GM12878 (cell line): ENCODE measurements at regions of chr9 and their contacts with region 1.

Region 1: GRCh38 chr9:133992780-133993634 is 883 bp upstream of the VAV2 start:
- DNase-seq: no peak
- ATAC-seq: peak; percentile 73
- H3K4me3 ChIP-seq: peak overlapping the region; percentile 88
- H3K27ac ChIP-seq: peak overlapping the region; percentile 86
- H3K4me1 ChIP-seq: peaks cover 15% of the 10 kb centered on the region
- H3K27me3 ChIP-seq: no peaks in the 10 kb centered on the region
- CTCF ChIP-seq: peak; percentile 34 to 56 (median 47); a peak in 4 of 6 replicates
- EP300 ChIP-seq: no peak
- POLR2A ChIP-seq: peak; percentile 78
- RAD21 ChIP-seq: peak; percentile 22; the same call in 1 of the 2 replicates

Region 2: GRCh38 chr9:133589454-133590227 is 403.4 kb before region 1 on chr9:
- CTCF ChIA-PET with region 1: interaction called, 4 read pairs
- POLR2A ChIA-PET with region 1: no interaction called
- RAD21 ChIA-PET with region 1: no interaction called
- SMC1A ChIA-PET with region 1: no interaction called
- in situ Hi-C with region 1: no loop called
- intact Hi-C with region 1: loop called (anchors 5 kb)
- DNase-seq: no peak
- ATAC-seq: no peak
- H3K4me3 ChIP-seq: no peak overlapping the region
- H3K27ac ChIP-seq: no peak overlapping the region
- H3K4me1 ChIP-seq: no peaks in the 10 kb centered on the region
- H3K27me3 ChIP-seq: peaks cover 8% of the 10 kb centered on the region in 2 experiments; a peak in 3 of 4 replicates
- CTCF ChIP-seq: peak; percentile 40 to 64 (median 60)
- EP300 ChIP-seq: no peak
- POLR2A ChIP-seq: no peak
- RAD21 ChIP-seq: 0 out of 2 replicates have a peak, but pooled peaks have one; percentile 21

Region 3: DNA sequence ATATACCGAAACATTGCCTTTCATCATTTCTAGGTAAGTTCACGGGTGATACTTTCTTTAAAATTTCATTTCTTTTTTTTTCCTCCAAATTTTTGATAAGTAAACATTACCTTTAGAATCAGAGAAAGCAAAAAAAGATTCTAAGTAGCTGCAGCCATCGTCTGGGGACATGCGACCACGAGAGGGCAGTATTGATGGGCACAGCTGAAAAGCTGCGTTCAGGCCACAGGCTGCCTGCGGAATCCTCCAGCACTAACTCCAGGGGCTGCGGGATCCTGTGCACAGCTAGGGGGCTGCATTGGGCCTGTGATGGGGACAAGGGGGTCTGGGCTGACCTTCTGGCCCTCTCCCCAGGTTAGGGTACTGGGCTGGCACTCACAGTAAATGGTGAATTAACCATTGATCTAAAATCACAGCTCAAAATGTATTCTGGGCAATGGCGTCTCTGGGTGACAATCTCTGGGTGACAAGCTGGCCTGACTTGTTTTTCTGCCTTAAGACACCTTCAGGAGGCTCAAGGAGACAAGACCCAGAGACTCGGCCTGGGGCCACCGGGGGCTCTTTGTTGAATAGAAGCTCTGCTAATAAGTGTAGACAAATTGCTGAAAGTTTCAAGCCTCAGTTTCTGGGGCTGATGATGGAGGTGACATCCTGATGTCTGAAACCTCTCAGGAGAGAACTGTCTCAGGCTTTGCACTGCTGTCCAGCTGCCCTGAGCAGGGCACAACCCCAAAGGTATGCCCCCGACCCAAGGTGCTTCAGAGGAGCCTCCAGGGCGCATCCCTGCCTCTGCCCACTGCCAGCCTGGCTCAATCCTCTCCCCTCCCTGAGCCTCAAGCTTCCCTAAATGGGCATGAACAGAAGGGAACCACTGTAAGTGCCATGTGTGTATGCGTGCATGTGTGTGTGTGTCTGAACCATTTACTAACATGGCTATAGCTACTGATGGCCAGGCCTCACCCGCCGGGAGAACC is 210.6 kb before region 1 on chr9:
- CTCF ChIA-PET with region 1: interaction called, 177 read pairs
- POLR2A ChIA-PET with region 1: interaction called, 16 read pairs
- RAD21 ChIA-PET with region 1: interaction called, 76 read pairs
- SMC1A ChIA-PET with region 1: interaction called, 53 read pairs
- in situ Hi-C with region 1: loop called (anchors 5 kb)
- intact Hi-C with region 1: loop called (anchors 1 kb)
- DNase-seq: peak; percentile 13
- ATAC-seq: peak; percentile 66
- H3K4me3 ChIP-seq: no peak overlapping the region
- H3K27ac ChIP-seq: no peak overlapping the region
- H3K4me1 ChIP-seq: peaks cover 26% of the 10 kb centered on the region
- H3K27me3 ChIP-seq: no peaks in the 10 kb centered on the region
- CTCF ChIP-seq: peak; percentile 70 to 81 (median 78)
- EP300 ChIP-seq: no peak
- POLR2A ChIP-seq: no peak
- RAD21 ChIP-seq: peak; percentile 78

Region 4: GRCh38 chr9:133821601-133822429 is 171.2 kb before region 1 on chr9:
- CTCF ChIA-PET with region 1: interaction called, 8 read pairs
- POLR2A ChIA-PET with region 1: interaction called, 4 read pairs
- RAD21 ChIA-PET with region 1: interaction called, 19 read pairs
- SMC1A ChIA-PET with region 1: interaction called, 11 read pairs
- in situ Hi-C with region 1: no loop called
- intact Hi-C with region 1: no loop called
- DNase-seq: no peak
- ATAC-seq: peak; percentile 47
- H3K4me3 ChIP-seq: 0 out of 2 replicates have a peak overlapping the region, but pooled peaks have one; percentile 5
- H3K27ac ChIP-seq: peak overlapping the region; percentile 77
- H3K4me1 ChIP-seq: peaks cover 37% of the 10 kb centered on the region
- H3K27me3 ChIP-seq: no peaks in the 10 kb centered on the region
- CTCF ChIP-seq: no peak
- EP300 ChIP-seq: no peak
- POLR2A ChIP-seq: 0 out of 2 replicates have a peak, but pooled peaks have one; percentile 40
- RAD21 ChIP-seq: no peak

Region 5: GRCh38 chr9:133916159-133916541 is 76.9 kb before region 1 on chr9:
- CTCF ChIA-PET with region 1: no interaction called
- POLR2A ChIA-PET with region 1: no interaction called
- RAD21 ChIA-PET with region 1: no interaction called
- SMC1A ChIA-PET with region 1: no interaction called
- in situ Hi-C with region 1: no loop called
- intact Hi-C with region 1: no loop called
- DNase-seq: no peak
- ATAC-seq: no peak
- H3K4me3 ChIP-seq: no peak overlapping the region
- H3K27ac ChIP-seq: no peak overlapping the region
- H3K4me1 ChIP-seq: no peaks in the 10 kb centered on the region
- H3K27me3 ChIP-seq: no peaks in the 10 kb centered on the region
- CTCF ChIP-seq: no peak
- EP300 ChIP-seq: no peak
- POLR2A ChIP-seq: no peak
- RAD21 ChIP-seq: no peak

Region 6: GRCh38 chr9:133945314-133945975 is 47.6 kb before region 1 on chr9:
- CTCF ChIA-PET with region 1: interaction called, 24 read pairs
- POLR2A ChIA-PET with region 1: interaction called, 12 read pairs
- RAD21 ChIA-PET with region 1: interaction called, 24 read pairs
- SMC1A ChIA-PET with region 1: interaction called, 9 read pairs
- in situ Hi-C with region 1: no loop called
- intact Hi-C with region 1: loop called (anchors 2 kb)
- DNase-seq: peak; percentile 89
- ATAC-seq: peak; percentile 87
- H3K4me3 ChIP-seq: peak overlapping the region; percentile 35; the same call in 1 of the 2 replicates
- H3K27ac ChIP-seq: peak overlapping the region; percentile 89
- H3K4me1 ChIP-seq: peaks cover 32% of the 10 kb centered on the region
- H3K27me3 ChIP-seq: no peaks in the 10 kb centered on the region
- CTCF ChIP-seq: no peak
- EP300 ChIP-seq: peak; percentile 73 to 85; a peak in 3 of 4 replicates
- POLR2A ChIP-seq: no peak
- RAD21 ChIP-seq: no peak

Region 7: DNA sequence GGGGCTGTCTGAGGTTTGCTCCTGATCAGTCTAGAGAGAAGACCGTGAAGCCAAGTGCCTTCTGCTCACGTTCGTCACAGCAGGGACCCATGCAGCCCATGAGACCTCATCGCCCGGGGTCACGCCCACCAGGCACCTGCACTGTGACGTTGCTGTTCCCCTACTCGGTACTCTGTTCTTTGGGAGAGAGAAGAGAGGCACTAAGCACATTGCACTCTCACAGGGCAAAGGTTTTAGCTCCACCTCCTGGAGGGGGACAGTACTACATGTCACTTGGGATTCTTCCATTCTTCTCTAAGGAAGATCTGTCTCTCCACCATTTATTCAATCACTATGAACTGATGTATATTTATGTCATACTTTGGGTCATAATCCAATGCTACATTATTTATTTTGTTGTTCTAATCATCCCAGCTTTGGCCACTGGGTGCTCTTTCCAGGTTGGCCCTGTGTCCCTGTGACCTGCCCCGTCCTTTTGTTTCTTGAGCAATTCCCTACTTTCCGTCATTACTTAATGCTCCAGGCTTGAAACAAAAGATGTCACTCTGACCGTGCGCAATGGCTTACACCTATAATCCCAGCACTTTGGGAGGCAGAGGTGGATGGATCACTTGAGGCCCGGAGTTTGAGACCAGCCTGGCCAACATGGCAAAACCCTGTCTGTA is 106.2 kb after region 1 on chr9:
- CTCF ChIA-PET with region 1: interaction called, 11 read pairs
- POLR2A ChIA-PET with region 1: no interaction called
- RAD21 ChIA-PET with region 1: interaction called, 3 read pairs
- SMC1A ChIA-PET with region 1: interaction called, 15 read pairs
- in situ Hi-C with region 1: no loop called
- intact Hi-C with region 1: loop called (anchors 2 kb)
- DNase-seq: peak; percentile 24
- ATAC-seq: peak; percentile 93
- H3K4me3 ChIP-seq: no peak overlapping the region
- H3K27ac ChIP-seq: no peak overlapping the region
- H3K4me1 ChIP-seq: no peaks in the 10 kb centered on the region; the same call in 1 of the 2 replicates
- H3K27me3 ChIP-seq: no peaks in the 10 kb centered on the region; a peak in 1 of 4 replicates
- CTCF ChIP-seq: peak; percentile 84 to 86 (median 84)
- EP300 ChIP-seq: no peak
- POLR2A ChIP-seq: no peak
- RAD21 ChIP-seq: peak; percentile 79